ENCODE measurements at regions of chr1 and their contacts with region 1.

Region 1: DNA sequence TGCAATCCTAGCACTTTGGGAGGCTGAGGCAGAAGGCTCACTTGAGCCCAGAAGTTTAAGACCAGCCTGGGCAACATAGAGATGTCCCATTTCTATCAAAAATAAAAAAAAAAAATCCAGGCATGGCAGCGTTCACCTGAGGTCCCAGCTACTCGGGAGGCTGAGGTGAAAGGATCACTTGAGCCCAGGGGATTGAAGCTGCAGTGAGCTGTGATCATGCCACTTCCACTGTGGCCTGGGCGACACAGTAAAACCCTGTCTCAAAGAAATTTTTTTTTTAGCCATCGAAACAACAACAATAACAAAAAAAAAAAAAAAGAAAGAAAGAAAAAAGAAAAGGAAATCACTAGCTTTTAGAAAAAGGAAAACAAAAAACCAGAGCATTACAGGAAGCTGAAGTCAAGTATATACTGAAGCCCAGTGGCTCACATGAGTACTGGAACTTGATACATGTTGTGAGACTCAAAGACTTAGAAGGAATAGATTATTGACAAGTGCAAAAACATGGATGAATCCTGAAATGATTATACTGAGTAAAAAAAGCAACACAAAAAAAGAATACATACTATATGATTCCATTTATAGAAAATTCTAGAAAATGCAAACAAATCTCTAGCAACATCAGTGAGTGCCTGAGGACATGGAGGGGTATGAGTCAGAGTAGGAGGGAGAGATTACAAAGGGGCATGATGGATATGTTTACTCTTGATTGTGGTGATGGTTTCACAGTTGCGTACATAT is 6.1 kb upstream of the RABGAP1L start:
- DNase-seq: no peak
- ATAC-seq: peak; percentile 53
- H3K4me3 ChIP-seq: no peak overlapping the region
- H3K27ac ChIP-seq: peak overlapping the region; percentile 40
- H3K4me1 ChIP-seq: peaks cover 29% of the 10 kb centered on the region
- H3K27me3 ChIP-seq: no peaks in the 10 kb centered on the region
- CTCF ChIP-seq: no peak
- EP300 ChIP-seq: no peak
- POLR2A ChIP-seq: no peak
- RAD21 ChIP-seq: peak; percentile 29; the same call in 1 of the 2 replicates

Region 2: GRCh38 chr1:173714759-173715537 is 438.3 kb before region 1 on chr1 and contains the start of gene KLHL20:
- CTCF ChIA-PET with region 1: no interaction called
- POLR2A ChIA-PET with region 1: no interaction called
- RAD21 ChIA-PET with region 1: no interaction called
- SMC1A ChIA-PET with region 1: no interaction called
- in situ Hi-C with region 1: no loop called
- intact Hi-C with region 1: no loop called
- DNase-seq: peak; percentile 73
- ATAC-seq: peak; percentile 98
- H3K4me3 ChIP-seq: peak within 1 kb of the TSS; percentile 92
- H3K27ac ChIP-seq: peak within 1 kb of the TSS; percentile 71
- H3K4me1 ChIP-seq: peaks cover 3% of the 10 kb centered on the region; the same call in 1 of the 2 replicates
- H3K27me3 ChIP-seq: no peaks in the 10 kb centered on the region
- CTCF ChIP-seq: no peak; a peak in 1 of 6 replicates
- EP300 ChIP-seq: no peak; a peak in 1 of 4 replicates
- POLR2A ChIP-seq: peak; percentile 90
- RAD21 ChIP-seq: 0 out of 2 replicates have a peak, but pooled peaks have one; percentile 10
- polyA plus RNA-seq, gene KLHL20: 3.8 to 5.8 TPM

Region 3: DNA sequence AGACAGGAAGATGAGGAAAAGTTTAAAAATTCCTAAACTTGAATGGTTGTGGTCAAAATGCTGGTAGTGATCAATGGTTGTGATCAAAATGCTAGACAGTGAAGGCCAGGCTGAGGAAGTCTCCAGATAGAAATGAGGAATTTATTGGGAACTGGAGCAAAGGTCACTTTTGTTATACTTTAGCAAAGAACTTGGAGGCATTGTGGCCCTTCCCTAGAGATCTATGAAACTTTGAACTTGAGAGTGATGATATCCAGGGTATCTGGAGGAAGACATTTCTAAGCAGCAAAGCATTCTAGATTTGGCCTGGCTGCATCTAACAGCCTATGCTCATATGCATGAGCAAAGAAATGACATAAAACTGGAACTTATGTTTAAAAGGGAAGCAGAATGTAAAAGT is 29.4 kb before region 1 on chr1:
- CTCF ChIA-PET with region 1: no interaction called
- POLR2A ChIA-PET with region 1: no interaction called
- RAD21 ChIA-PET with region 1: no interaction called
- SMC1A ChIA-PET with region 1: no interaction called
- in situ Hi-C with region 1: no loop called
- intact Hi-C with region 1: no loop called
- DNase-seq: no peak
- ATAC-seq: no peak
- H3K4me3 ChIP-seq: no peak overlapping the region
- H3K27ac ChIP-seq: no peak overlapping the region
- H3K4me1 ChIP-seq: no peaks in the 10 kb centered on the region
- H3K27me3 ChIP-seq: no peaks in the 10 kb centered on the region
- CTCF ChIP-seq: no peak
- EP300 ChIP-seq: no peak
- POLR2A ChIP-seq: no peak
- RAD21 ChIP-seq: no peak

Region 4: DNA sequence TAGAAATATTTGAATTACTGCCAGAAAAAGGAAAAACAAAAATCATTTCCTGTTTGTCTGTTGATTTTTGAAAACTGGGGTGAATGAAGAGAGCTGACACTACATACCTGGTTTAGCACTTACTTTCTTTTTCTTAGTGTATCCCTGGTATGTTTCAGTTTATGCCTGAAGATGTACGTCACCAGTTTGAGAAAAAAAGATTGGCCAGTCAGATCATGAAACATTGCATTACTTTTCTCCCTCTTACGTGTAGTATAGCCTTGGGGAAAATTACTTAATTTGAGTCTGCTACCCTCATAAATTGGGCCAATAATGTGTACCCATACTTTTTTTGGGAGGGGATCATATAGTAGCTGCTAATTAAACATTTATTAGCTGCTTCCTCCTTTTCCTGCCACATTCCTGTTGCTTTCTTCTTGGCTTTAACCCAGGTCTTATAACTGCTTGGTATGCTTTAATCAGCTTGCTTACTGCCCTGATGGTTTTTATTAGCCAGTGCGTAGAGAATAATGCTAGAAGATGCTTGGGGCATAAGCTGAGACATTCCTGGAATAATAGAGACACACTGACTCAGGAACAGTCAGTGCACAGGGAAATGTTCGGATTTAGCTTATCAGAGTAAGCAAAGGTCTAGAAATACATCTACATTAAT is 38.1 kb after region 1 on chr1:
- CTCF ChIA-PET with region 1: no interaction called
- POLR2A ChIA-PET with region 1: interaction called, 11 read pairs
- RAD21 ChIA-PET with region 1: no interaction called
- SMC1A ChIA-PET with region 1: no interaction called
- in situ Hi-C with region 1: no loop called
- intact Hi-C with region 1: no loop called
- DNase-seq: no peak
- ATAC-seq: no peak
- H3K4me3 ChIP-seq: no peak overlapping the region
- H3K27ac ChIP-seq: no peak overlapping the region; the same call in 1 of the 2 replicates
- H3K4me1 ChIP-seq: peaks cover 14% of the 10 kb centered on the region; the same call in 1 of the 2 replicates
- H3K27me3 ChIP-seq: no peaks in the 10 kb centered on the region
- CTCF ChIP-seq: no peak
- EP300 ChIP-seq: no peak
- POLR2A ChIP-seq: no peak
- RAD21 ChIP-seq: no peak

Region 5: DNA sequence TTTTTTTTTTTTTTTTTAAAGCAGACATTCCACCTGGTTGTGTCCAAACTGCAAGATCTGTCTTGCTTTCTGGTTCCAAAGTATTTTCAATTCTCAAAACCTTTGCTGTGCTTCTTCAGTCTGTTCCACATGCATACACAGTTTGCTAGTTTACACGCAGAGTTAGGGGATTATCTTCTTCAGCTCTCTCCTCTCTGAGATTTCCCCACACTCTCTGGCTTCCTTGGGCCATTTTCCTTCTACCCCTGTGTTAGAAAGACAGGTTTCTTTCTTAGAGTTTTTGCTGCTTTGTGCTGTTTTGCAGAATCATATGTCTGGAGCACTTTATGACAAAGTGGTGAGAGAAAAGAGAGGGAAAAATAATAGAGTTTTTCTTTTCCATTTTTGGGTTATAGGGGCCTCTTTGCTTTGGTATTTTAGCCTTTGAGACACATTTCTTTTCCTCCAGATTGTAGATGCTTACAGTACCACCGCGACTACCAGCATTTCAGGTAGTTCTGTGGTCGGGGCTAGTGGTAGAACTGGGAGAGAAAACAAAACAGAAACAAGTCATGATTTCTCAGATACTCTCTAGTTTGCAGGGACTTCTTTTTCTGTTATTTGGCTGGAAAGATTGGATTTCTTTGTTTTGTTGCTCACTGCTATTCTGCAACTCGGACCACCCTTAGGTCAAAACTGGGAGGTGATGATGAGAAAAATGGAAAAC is 72.4 kb after region 1 on chr1:
- CTCF ChIA-PET with region 1: no interaction called
- POLR2A ChIA-PET with region 1: no interaction called
- RAD21 ChIA-PET with region 1: no interaction called
- SMC1A ChIA-PET with region 1: no interaction called
- in situ Hi-C with region 1: no loop called
- intact Hi-C with region 1: no loop called
- DNase-seq: no peak
- ATAC-seq: peak; percentile 82
- H3K4me3 ChIP-seq: peak overlapping the region; percentile 17; the same call in 1 of the 2 replicates
- H3K27ac ChIP-seq: peak overlapping the region; percentile 49
- H3K4me1 ChIP-seq: peaks cover 19% of the 10 kb centered on the region; the same call in 1 of the 2 replicates
- H3K27me3 ChIP-seq: no peaks in the 10 kb centered on the region
- CTCF ChIP-seq: no peak
- EP300 ChIP-seq: no peak
- POLR2A ChIP-seq: no peak
- RAD21 ChIP-seq: no peak